Activated T-helper 2 cell treated with anti-CD3 and anti-CD28 coated beads, Interferon-gamma antibody, Interleukin-2, Interleukin-4, amounts not matched to agents 10 μg/mL and 5 μg/mL and 100 μg/mL, durations not matched to agents 14 hours and 24 hours and 36 hours (primary cell): ENCODE measurements at regions of chr6 and their contacts with region 1.

Region 1: DNA sequence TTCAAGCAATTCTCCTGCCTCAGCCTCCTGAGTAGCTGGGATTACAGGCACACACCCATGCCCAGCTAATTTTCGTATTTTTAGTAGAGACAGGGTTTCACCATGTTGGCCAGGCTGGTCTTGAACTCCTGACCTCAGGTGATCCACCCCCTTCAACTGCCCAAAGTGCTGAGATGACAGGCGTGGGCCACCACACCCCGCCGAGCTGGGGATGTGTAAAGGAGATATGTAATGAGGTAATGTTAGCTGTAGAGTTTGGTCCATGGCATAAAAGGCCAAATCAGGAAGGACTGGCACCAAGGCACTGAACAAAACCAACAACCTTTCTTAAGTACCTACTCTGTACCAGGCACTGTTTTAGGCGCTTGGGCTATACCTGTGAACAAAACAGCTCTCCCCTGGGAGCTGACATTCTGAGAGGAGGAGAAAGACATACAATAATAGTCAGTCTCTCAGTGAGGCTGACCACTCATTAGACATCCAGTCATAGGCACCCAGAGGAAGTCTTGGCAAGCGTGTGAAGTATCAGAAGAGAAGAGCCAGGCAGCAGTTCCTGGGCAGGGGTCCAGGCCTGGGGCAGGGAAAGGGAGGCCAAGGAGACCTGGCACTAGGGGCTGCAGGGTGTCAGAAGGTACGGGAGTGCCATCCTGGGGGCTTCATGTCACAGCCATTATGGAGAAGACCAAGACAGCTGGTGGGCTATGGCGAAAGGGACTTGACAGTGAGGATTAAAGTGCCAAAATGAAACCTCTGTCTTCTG is 164.8 kb upstream of the DTNBP1 start:
- DNase-seq: no peak
- H3K4me3 Mint-ChIP-seq: no peak overlapping the region
- H3K27ac Mint-ChIP-seq: no peak overlapping the region
- H3K4me1 Mint-ChIP-seq: peaks cover 4% of the 10 kb centered on the region
- H3K27me3 Mint-ChIP-seq: no peaks in the 10 kb centered on the region

Region 2: GRCh38 chr6:15786846-15787245 is 40.8 kb before region 1 on chr6:
- intact Hi-C with region 1: loop called (anchors 5 kb)
- DNase-seq: no peak
- H3K4me3 Mint-ChIP-seq: no peak overlapping the region
- H3K27ac Mint-ChIP-seq: peak overlapping the region; percentile 49
- H3K4me1 Mint-ChIP-seq: peaks cover 2% of the 10 kb centered on the region
- H3K27me3 Mint-ChIP-seq: no peaks in the 10 kb centered on the region

Region 3: DNA sequence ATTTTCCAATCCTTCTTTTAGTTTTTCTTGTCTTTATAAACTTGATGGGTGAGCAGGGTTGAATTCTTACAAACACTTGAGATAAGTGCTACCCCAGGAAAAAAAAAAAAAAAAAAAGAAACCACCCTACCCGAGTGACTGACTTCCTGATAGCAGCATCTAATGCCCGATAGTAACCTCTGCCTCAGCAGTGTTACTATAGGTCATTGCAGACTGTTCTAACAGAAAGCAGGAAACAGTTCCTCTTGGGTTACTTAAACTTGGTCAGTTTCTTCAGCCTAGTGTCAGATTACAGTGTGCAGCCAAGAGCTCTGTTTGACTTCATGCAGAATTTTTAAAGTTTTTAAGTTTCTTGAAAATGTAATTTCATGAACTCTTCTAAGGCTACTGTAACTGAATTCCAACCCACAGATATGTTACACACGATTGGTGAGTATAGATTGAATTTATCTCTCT is 303.3 kb after region 1 on chr6:
- intact Hi-C with region 1: no loop called
- DNase-seq: peak; percentile 45
- H3K4me3 Mint-ChIP-seq: peak overlapping the region; percentile 90
- H3K27ac Mint-ChIP-seq: peak overlapping the region; percentile 81
- H3K4me1 Mint-ChIP-seq: peaks cover 37% of the 10 kb centered on the region
- H3K27me3 Mint-ChIP-seq: peaks cover 10% of the 10 kb centered on the region

Region 4: GRCh38 chr6:16216501-16217155 is 389.0 kb after region 1 on chr6:
- intact Hi-C with region 1: no loop called
- DNase-seq: no peak
- H3K4me3 Mint-ChIP-seq: no peak overlapping the region
- H3K27ac Mint-ChIP-seq: no peak overlapping the region
- H3K4me1 Mint-ChIP-seq: peaks cover 12% of the 10 kb centered on the region
- H3K27me3 Mint-ChIP-seq: peaks cover 31% of the 10 kb centered on the region